ENCODE measurements at regions of chr3 and their contacts with region 1.

Region 1: GRCh38 chr3:17442332-17443049 is 299.9 kb downstream of the TBC1D5 start:
- DNase-seq: no peak
- ATAC-seq: no peak
- H3K4me3 ChIP-seq: no peak overlapping the region
- H3K27ac ChIP-seq: no peak overlapping the region
- H3K4me1 ChIP-seq: no peaks in the 10 kb centered on the region
- H3K27me3 ChIP-seq: no peaks in the 10 kb centered on the region
- CTCF ChIP-seq: no peak

Region 2: DNA sequence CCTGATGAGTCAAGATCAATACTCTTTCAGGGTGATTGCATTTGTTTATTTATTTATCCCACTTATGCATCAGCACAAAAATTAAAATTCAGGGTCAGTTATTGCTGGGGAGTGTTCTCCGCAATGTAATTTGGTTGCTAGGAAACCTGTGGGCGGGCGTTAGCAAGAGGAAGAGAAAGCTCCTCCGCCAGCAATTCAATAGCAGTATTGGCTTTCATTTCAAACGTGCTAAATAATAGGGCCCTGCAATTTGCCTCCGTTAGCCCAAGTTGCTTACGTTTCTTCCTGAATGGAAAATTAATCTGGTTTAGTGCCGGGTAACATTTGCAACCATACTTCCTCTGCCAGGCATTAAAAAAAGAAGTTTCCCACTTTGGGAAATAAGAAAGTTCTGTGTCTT is 593.3 kb before region 1 on chr3:
- CTCF ChIA-PET with region 1: no interaction called
- POLR2A ChIA-PET with region 1: no interaction called
- in situ Hi-C with region 1: no loop called
- intact Hi-C with region 1: loop called (anchors 5 kb)
- DNase-seq: no peak
- ATAC-seq: no peak
- H3K4me3 ChIP-seq: no peak overlapping the region
- H3K27ac ChIP-seq: no peak overlapping the region
- H3K4me1 ChIP-seq: no peaks in the 10 kb centered on the region
- H3K27me3 ChIP-seq: no peaks in the 10 kb centered on the region
- CTCF ChIP-seq: no peak